Dorsolateral prefrontal cortex (tissue), 120 donors: ENCODE measurements at regions of chr10 and their contacts with region 1.

Region 1: GRCh38 chr10:69092959-69093850 is 5.3 kb downstream of the SRGN start:
- DNase-seq: peak in 3 of 10 donors; percentile 7 to 60 (median 55)
- H3K4me3 ChIP-seq: peak overlapping the region in 3 of 59 donors; percentile 5 to 64 (median 23)
- H3K27ac ChIP-seq: peak overlapping the region in 14 of 59 donors; percentile 1 to 93 (median 31)
- H3K27me3 ChIP-seq: no peaks in the 10 kb centered on the region
- CTCF ChIP-seq: peak; percentile 38 to 82 (median 68)

Region 2: DNA sequence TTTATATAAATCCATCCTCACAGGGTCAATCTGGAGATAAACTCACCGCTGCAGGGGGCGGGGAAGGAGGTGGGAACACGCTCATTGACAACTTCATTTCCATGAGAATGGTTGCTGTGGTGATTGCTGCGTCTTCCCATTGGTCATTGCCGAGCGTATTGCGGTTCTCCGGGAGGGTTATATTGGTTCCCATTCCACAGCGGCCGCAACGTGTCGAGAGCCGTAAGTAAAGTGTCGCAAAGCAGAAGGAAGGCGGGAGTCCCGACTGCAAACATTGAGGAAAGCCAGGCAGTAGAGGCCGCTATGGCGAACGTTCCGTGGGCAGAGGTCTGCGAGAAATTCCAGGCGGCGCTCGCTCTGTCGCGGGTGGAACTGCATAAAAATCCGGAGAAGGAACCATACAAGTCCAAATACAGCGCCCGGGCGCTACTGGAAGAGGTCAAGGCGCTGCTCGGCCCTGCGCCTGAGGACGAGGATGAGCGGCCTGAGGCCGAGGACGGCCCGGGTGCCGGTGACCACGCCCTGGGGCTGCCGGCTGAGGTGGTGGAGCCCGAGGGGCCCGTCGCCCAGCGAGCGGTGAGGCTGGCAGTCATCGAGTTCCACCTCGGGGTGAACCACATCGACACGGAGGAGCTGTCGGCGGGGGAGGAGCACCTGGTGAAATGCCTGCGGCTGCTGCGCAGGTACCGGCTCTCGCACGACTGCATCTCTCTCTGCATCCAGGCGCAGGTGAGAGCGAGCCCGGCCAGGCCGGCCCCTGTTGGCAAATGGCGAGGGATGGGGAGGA is 104.5 kb before region 1 on chr10 and contains the start of gene KIFBP:
- intact Hi-C with region 1: loop called in 1 of 2 experiments (anchors 10 kb)
- DNase-seq: peak; percentile 86 to 99 (median 96)
- H3K4me3 ChIP-seq: peak within 1 kb of the TSS; percentile 58 to 100 (median 93)
- H3K27ac ChIP-seq: peak within 1 kb of the TSS; percentile 0 to 94 (median 86)
- H3K27me3 ChIP-seq: no peaks in the 10 kb centered on the region
- CTCF ChIP-seq: peak in 55 of 56 donors; percentile 17 to 83 (median 61)
- total RNA-seq, gene KIFBP: 33.1 to 77.4 (median 62.0) TPM

Region 3: GRCh38 chr10:69186524-69186923 is 93.3 kb after region 1 on chr10:
- intact Hi-C with region 1: no loop called
- DNase-seq: no peak
- H3K4me3 ChIP-seq: no peak overlapping the region
- H3K27ac ChIP-seq: no peak overlapping the region
- H3K27me3 ChIP-seq: no peaks in the 10 kb centered on the region
- CTCF ChIP-seq: no peak

Region 4: DNA sequence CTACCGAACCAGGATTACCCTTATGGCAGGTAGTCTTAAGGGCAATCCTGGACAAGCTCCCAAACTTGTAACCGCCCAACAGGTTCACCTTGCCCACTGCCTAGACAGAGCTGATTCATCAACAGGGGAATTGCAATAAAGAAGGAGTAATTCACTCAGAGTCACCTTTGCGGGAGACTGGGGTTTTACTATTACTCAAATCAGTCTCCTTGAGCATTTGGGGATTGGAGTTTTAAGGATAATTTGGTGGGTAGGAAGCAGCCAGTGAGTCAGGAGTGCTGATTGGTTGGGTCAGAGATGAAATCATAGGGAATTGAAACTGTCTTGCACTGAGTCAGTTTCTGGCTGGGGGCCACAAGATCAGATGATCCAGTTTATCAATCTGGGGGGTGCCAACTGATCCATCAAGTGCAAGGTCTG is 210.4 kb after region 1 on chr10:
- intact Hi-C with region 1: no loop called
- DNase-seq: no peak
- H3K4me3 ChIP-seq: no peak overlapping the region
- H3K27ac ChIP-seq: no peak overlapping the region
- H3K27me3 ChIP-seq: peaks cover 0 to 2% (median 0%) of the 10 kb centered on the region in 45 donors
- CTCF ChIP-seq: no peak

Region 5: DNA sequence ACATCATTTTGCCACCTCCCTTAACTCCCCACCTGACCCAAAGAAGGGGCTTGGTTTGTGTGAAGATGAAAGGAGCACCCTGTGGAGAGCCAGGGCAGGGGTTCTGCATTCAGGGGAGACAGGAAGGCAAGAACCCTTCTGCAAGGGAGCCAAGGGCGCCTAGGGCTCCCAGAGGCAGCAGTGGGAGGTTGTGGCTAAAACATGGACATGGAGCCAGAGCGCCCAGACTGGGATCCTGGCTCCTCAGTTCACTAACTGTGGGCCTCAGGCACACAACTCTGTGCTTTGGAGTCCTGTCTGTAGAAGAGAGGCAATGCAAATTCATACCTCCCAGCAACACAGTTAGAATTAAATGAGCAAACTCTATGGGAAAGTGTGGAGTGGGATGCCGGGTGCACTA is 836.4 kb after region 1 on chr10:
- intact Hi-C with region 1: no loop called
- DNase-seq: no peak
- H3K4me3 ChIP-seq: no peak overlapping the region
- H3K27ac ChIP-seq: no peak overlapping the region
- H3K27me3 ChIP-seq: peaks cover 0 to 12% (median 0%) of the 10 kb centered on the region in 45 donors
- CTCF ChIP-seq: no peak